Colonic mucosa (tissue), 4 donors: ENCODE measurements at regions of chr9 and their contacts with region 1.

Region 1: DNA sequence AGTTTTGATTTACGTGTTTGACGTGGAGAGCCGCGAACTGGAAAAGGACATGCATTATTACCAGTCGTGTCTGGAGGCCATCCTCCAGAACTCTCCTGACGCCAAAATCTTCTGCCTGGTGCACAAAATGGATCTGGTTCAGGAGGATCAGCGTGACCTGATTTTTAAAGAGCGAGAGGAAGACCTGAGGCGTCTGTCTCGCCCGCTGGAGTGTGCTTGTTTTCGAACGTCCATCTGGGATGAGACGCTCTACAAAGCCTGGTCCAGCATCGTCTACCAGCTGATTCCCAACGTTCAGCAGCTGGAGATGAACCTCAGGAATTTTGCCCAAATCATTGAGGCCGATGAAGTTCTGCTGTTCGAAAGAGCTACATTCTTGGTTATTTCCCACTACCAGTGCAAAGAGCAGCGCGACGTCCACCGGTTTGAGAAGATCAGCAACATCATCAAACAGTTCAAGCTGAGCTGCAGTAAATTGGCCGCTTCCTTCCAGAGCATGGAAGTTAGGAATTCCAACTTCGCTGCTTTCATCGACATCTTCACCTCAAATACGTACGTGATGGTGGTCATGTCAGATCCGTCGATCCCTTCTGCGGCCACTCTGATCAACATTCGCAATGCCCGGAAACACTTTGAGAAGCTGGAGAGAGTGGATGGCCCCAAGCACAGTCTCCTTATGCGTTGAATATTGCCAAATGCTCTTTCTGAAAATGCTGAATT is 850 bp downstream of the RRAGA start:
- DNase-seq: peak; percentile 45
- H3K4me3 ChIP-seq: peak overlapping the region; percentile 88
- H3K27ac ChIP-seq: peak overlapping the region; percentile 93
- H3K4me1 ChIP-seq: peaks cover 16% of the 10 kb centered on the region
- H3K27me3 ChIP-seq: no peaks in the 10 kb centered on the region
- CTCF ChIP-seq: no peak

Region 2: DNA sequence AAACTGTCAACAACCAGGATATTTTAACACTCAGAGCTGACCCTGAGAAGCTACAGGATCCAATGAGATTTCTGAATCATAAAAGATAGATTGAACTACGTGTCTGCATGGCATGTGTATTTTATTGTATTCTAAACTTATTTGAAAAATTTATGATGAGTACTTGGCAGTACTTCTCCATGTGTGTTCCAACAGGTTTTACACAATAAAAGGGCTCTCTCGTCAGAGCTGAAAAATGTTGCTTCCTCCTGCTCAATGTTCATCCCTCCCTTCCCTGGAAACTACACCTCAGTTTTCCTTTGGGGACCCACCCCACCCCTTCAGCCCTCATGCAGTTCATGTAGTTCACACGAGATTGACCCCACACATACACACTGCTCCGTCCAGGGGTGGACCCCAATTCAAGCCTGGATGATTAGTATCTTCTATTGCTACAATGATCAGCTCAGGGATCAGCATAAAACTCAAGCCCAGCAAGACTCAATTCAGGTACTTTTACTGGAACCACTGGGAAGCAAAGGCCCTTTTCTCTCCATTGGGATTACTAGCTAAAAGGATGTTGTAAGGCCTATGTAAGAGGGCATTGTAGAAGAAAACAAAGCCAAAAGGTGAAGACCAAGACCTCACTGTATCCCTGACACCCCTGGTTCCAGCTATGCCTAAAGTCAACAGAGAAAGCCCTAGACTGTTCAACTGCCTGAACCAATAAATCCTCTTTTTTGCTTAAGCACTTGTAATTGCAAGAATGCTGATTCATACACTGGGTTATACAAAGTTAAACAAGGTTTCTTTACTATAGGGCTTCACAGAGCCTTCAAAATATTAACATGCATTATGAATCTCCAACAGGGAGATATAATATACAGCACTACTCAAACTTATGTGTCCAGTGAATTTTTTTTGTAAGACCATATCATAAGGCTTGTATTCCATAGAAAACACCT is 129.7 kb before region 1 on chr9:
- intact Hi-C with region 1: no loop called
- DNase-seq: no peak
- H3K4me3 ChIP-seq: no peak overlapping the region
- H3K27ac ChIP-seq: no peak overlapping the region
- H3K4me1 ChIP-seq: no peaks in the 10 kb centered on the region
- H3K27me3 ChIP-seq: no peaks in the 10 kb centered on the region
- CTCF ChIP-seq: no peak

Region 3: GRCh38 chr9:19174127-19174912 is 124.2 kb after region 1 on chr9:
- intact Hi-C with region 1: loop called (anchors 5 kb)
- DNase-seq: peak; percentile 41
- H3K4me3 ChIP-seq: no peak overlapping the region
- H3K27ac ChIP-seq: no peak overlapping the region
- H3K4me1 ChIP-seq: no peaks in the 10 kb centered on the region
- H3K27me3 ChIP-seq: no peaks in the 10 kb centered on the region
- CTCF ChIP-seq: peak; percentile 23